Prostate gland (tissue), 2 donors: ENCODE measurements at regions of chr12 and their contacts with region 1.

Region 1: GRCh38 chr12:120571299-120571698 is 9.9 kb downstream of the POP5 start:
- DNase-seq: no peak
- H3K4me3 ChIP-seq: no peak overlapping the region
- H3K27ac ChIP-seq: no peak overlapping the region
- H3K4me1 ChIP-seq: peaks cover 4% of the 10 kb centered on the region
- H3K27me3 ChIP-seq: no peaks in the 10 kb centered on the region
- CTCF ChIP-seq: no peak
- POLR2A ChIP-seq: no peak

Region 2: GRCh38 chr12:119876761-119877638 is 694.3 kb before region 1 on chr12 and contains the start of gene CIT:
- intact Hi-C with region 1: no loop called
- DNase-seq: peak; percentile 90
- H3K4me3 ChIP-seq: peak within 1 kb of the TSS; percentile 60 to 63
- H3K27ac ChIP-seq: peak within 1 kb of the TSS in 1 of 2 donors; percentile 49
- H3K4me1 ChIP-seq: no peaks in the 10 kb centered on the region
- H3K27me3 ChIP-seq: no peaks in the 10 kb centered on the region
- CTCF ChIP-seq: no peak
- POLR2A ChIP-seq: no peak
- total RNA-seq, gene CIT: 2.6 to 13.1 TPM

Region 3: DNA sequence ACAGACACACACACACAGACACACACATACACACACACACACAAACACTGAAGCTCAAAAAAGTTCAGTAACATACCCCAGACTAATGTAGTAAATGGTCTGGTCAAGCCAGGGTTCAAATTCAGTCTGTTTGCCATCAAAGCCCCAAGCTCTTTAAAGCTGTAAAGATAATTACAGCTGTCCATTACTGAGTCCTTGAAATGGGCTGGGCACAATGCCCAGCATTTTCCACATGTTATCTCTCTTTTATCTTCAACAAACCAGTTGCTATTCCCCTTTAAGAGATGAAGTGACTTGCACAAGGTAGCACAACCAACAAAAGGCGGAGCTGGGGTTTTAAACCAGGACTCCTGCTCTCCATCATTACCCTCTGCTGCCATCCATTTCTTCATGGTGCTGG is 131.3 kb after region 1 on chr12:
- intact Hi-C with region 1: loop called (anchors 5 kb)
- DNase-seq: no peak
- H3K4me3 ChIP-seq: no peak overlapping the region
- H3K27ac ChIP-seq: no peak overlapping the region
- H3K4me1 ChIP-seq: no peaks in the 10 kb centered on the region
- H3K27me3 ChIP-seq: no peaks in the 10 kb centered on the region
- CTCF ChIP-seq: no peak
- POLR2A ChIP-seq: no peak